T-cell (primary cell): ENCODE measurements at regions of chr6 and their contacts with region 1.

Region 1: DNA sequence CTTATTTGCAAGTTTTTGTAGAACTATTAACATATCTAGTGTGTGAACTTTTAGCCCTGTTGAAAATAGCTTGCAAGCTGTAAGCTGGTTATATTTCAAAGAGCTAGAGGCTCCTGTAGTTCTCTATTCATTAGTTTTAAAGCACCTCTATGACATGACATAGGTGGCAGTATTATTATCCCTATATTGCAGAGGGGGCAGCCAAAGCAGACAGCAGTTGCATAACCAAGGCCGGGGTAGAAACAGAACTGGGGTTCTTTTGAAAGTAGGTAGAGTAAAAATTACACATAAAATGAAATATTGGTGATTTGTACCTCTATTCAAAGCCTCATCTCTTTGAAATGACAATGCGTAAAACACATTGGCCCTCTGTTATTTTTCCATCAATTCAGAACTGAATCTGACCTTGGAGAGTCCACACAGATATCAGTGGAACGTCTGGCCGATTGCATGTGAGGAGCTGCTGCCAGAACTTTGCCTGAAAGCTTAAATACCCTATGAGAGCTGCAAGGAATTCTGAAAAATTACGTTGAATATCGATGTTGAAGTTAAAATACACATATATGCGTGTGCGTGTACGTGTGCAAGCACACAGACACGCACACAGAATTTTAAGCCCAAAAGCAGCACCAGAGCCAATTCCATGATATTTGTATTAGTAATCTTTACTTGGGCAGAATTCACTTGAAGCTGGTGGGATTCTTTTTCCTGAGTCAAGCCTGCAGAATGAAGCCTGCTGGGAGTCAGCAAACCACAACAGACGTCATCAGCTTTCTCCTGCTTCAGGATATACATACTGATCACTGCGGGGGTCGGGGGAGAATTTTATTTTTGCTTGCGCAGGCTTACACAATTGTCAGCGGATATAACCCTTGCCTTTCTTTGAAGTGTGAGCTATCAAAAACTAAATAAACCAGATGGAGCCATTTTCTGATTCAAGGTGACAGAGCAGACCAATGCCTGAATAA is 163.2 kb downstream of the PDE7B start:
- DNase-seq: no peak
- ATAC-seq: no peak
- H3K4me3 ChIP-seq: no peak overlapping the region
- H3K4me3 Mint-ChIP-seq: no peak overlapping the region
- H3K27ac ChIP-seq: no peak overlapping the region
- H3K27ac Mint-ChIP-seq: no peak overlapping the region
- H3K4me1 ChIP-seq: no peaks in the 10 kb centered on the region
- H3K4me1 Mint-ChIP-seq: no peaks in the 10 kb centered on the region
- H3K27me3 ChIP-seq: peaks cover 0 to 2% of the 10 kb centered on the region in 2 experiments
- H3K27me3 Mint-ChIP-seq: peaks cover 0 to 3% of the 10 kb centered on the region in 2 donors

Region 2: DNA sequence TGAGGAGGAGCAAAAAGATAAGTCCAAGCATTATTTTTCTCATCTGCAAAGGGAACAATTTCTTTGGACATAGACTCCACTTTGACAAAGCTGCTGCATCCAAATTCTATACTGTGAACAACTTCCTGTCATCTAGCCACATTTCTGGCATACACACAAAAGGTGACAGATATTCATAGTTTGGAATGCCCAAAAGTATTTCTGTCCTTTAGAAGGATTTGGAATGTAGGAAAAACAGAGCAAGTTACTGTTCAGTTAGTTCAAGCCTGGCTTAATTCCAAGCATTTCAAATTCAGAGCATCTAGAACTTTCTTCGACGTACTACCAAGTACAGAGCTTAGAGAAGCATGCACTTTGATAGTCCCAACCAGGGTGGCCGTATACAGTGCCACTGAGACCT is 29.3 kb before region 1 on chr6:
- CTCF ChIA-PET with region 1: no interaction called
- POLR2A ChIA-PET with region 1: no interaction called
- DNase-seq: no peak
- ATAC-seq: no peak
- H3K4me3 ChIP-seq: no peak overlapping the region
- H3K4me3 Mint-ChIP-seq: no peak overlapping the region
- H3K27ac ChIP-seq: no peak overlapping the region
- H3K27ac Mint-ChIP-seq: no peak overlapping the region
- H3K4me1 ChIP-seq: no peaks in the 10 kb centered on the region
- H3K4me1 Mint-ChIP-seq: no peaks in the 10 kb centered on the region
- H3K27me3 ChIP-seq: no peaks in the 10 kb centered on the region
- H3K27me3 Mint-ChIP-seq: peaks cover 0 to 2% of the 10 kb centered on the region in 2 donors

Region 3: DNA sequence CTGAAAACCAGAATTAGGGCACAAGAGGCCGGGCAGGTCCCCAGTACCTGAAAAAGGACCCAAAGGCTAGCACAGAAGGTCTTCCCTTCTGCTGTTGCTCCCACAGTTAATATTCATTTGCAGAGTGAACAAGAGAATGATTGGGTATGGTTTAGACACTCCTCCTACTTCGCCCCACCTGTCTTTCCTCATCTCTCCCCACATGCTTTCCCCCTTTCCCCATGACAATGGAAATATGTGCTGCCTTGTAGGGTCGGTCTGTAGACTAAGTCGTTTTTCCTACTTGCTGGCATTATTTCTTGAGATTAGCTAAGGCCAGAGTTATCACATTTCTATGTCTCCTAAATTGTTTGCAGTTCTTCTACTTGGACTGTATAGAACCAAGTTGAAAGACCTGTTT is 18.7 kb after region 1 on chr6:
- CTCF ChIA-PET with region 1: interaction called in 1 of 2 experiments, 11 read pairs
- POLR2A ChIA-PET with region 1: no interaction called
- DNase-seq: no peak
- ATAC-seq: no peak
- H3K4me3 ChIP-seq: no peak overlapping the region
- H3K4me3 Mint-ChIP-seq: no peak overlapping the region
- H3K27ac ChIP-seq: no peak overlapping the region
- H3K27ac Mint-ChIP-seq: no peak overlapping the region
- H3K4me1 ChIP-seq: no peaks in the 10 kb centered on the region
- H3K4me1 Mint-ChIP-seq: peaks cover 5 to 12% (median 6%) of the 10 kb centered on the region in 3 donors
- H3K27me3 ChIP-seq: peaks cover 0 to 6% of the 10 kb centered on the region in 2 experiments
- H3K27me3 Mint-ChIP-seq: peaks cover 0 to 8% of the 10 kb centered on the region in 2 donors